ENCODE measurements at regions of chr10 and their contacts with region 1.

Region 1: DNA sequence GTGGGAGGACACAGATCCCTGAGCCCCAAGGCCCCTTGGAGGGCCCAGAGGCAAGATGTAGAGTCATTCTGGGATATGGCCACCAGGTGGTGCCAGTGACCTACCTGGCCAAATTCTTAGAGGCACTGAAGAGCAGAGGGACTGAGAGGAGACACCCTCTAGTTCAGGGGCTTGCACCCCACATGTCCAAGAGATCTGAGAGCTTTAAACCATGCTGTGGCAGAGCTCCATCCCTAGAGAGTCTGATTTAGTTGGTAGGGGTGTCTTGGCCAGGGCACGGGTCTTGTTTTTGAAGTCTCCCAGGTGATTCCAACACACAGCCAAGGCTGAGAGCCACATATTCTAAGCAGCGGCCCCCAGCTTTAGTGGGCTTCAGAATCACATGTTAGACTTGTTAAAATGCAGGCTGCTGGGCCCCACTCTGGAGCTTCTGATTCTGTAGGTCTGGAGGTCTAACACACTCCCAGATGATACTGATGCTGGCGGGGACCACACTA is 52.5 kb downstream of the PRF1 start:
- DNase-seq: peak; percentile 69 to 76
- H3K4me3 ChIP-seq: no peak overlapping the region
- H3K27ac ChIP-seq: no peak overlapping the region
- H3K4me1 ChIP-seq: peaks cover 5 to 16% of the 10 kb centered on the region in 2 donors
- H3K27me3 ChIP-seq: no peaks in the 10 kb centered on the region
- CTCF ChIP-seq: peak; percentile 80 to 95 (median 88)
- POLR2A ChIP-seq: no peak

Region 2: GRCh38 chr10:71212318-71213126 is 662.5 kb after region 1 on chr10 and contains the start of gene UNC5B:
- intact Hi-C with region 1: loop called (anchors 10 kb)
- DNase-seq: peak; percentile 90 to 93
- H3K4me3 ChIP-seq: peak within 1 kb of the TSS; percentile 41 to 63 (median 53)
- H3K27ac ChIP-seq: peak within 1 kb of the TSS in 2 of 3 donors; percentile 48 to 82
- H3K4me1 ChIP-seq: peaks cover 18 to 22% of the 10 kb centered on the region in 2 donors
- H3K27me3 ChIP-seq: no peaks in the 10 kb centered on the region
- CTCF ChIP-seq: peak in 3 of 6 experiments; percentile 34 to 41 (median 39)
- POLR2A ChIP-seq: peak in 1 of 2 donors; percentile 92
- total RNA-seq, gene UNC5B: 3.9 to 7.1 (median 5.7) TPM

Measured in thyroid gland (tissue), 4 donors.